Endothelial cell of umbilical vein (primary cell): ENCODE measurements at regions of chr15 and their contacts with region 1.

Region 1: GRCh38 chr15:43225201-43225949 is 4.6 kb upstream of the EPB42 start:
- DNase-seq: peak; percentile 56
- H3K4me3 ChIP-seq: no peak overlapping the region
- H3K27ac ChIP-seq: no peak overlapping the region
- H3K4me1 ChIP-seq: no peaks in the 10 kb centered on the region
- H3K27me3 ChIP-seq: peaks cover 8 to 19% of the 10 kb centered on the region in 2 experiments
- CTCF ChIP-seq: peak; percentile 73 to 76
- POLR2A ChIP-seq: no peak

Region 2: DNA sequence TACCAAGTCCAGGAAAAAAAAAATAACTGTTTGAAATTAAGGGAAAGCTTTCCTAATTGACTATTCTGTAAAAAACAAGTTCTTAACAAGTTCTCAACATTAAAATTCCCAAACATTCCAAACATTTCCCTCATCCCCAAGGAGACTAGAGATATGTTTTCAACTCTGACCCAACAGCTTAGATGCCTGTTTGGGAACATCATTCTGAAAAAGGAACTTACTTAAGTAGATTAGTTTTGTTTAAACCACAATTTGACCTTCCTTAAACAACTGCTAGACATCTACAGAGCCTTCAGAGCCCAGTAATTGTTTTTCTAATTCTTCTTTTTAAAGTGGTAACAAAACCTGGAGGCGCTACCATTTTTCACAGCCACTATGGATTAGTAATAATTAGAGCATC is 132.3 kb before region 1 on chr15:
- CTCF ChIA-PET with region 1: no interaction called
- POLR2A ChIA-PET with region 1: no interaction called
- dilution Hi-C with region 1: no loop called
- intact Hi-C with region 1: no loop called
- DNase-seq: no peak
- H3K4me3 ChIP-seq: no peak overlapping the region
- H3K27ac ChIP-seq: no peak overlapping the region
- H3K4me1 ChIP-seq: no peaks in the 10 kb centered on the region
- H3K27me3 ChIP-seq: no peaks in the 10 kb centered on the region
- CTCF ChIP-seq: no peak
- POLR2A ChIP-seq: no peak

Region 3: DNA sequence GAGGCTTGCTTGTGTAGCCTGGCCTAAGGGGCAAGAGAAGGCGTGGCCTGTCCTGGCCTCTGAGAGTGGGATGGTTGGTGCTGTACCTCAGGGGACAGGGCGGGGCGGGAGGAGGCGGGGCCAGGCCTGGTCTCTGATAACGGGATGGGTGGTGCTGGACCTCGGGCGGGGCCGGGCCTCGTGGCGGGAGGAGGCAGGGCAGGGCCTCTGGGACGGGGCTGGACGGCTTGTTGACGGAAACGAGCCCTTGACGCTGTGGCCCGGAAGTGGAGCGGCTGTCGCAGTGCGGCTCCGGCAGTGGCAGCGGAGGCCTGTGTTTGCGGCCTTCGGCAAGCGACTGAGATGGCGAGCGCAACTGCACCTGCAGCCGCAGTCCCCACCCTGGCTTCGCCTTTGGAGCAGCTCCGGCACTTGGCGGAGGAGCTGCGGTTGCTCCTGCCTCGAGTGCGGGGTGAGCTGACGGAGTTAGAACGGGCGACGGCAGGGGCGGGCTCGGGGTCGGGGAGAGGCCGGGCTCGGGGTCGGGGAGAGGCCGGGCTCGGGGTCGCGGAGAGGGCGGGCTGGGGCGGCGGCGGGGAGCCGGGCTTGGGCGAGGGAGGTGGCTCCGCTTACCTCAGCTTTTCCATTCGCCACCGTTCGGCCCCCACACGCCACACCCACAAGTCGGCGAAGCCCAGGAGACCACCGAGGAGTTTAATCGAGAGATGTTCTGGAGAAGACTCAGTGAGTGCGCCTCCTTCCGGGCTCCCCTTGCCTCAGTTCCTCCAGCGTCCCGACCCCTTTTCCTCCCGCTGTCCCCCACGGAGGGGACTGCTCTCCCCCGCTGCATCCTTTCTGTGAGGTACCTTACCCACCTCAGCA is 40.0 kb before region 1 on chr15 and contains the start of gene CCNDBP1:
- CTCF ChIA-PET with region 1: interaction called, 14 read pairs
- POLR2A ChIA-PET with region 1: no interaction called
- dilution Hi-C with region 1: no loop called
- intact Hi-C with region 1: no loop called
- DNase-seq: peak; percentile 70
- H3K4me3 ChIP-seq: peak within 1 kb of the TSS; percentile 32 to 76 (median 57)
- H3K27ac ChIP-seq: peak within 1 kb of the TSS; percentile 9
- H3K4me1 ChIP-seq: peaks cover 19% of the 10 kb centered on the region
- H3K27me3 ChIP-seq: no peaks in the 10 kb centered on the region
- CTCF ChIP-seq: peak in 1 of 2 donors; percentile 35
- POLR2A ChIP-seq: peak; percentile 73
- total RNA-seq, gene CCNDBP1: 39.9 and 41.4 TPM in 2 replicates

Region 4: GRCh38 chr15:43204016-43204901 is 21.1 kb before region 1 on chr15:
- CTCF ChIA-PET with region 1: interaction called, 28 read pairs
- POLR2A ChIA-PET with region 1: no interaction called
- dilution Hi-C with region 1: no loop called
- intact Hi-C with region 1: no loop called
- DNase-seq: peak; percentile 67
- H3K4me3 ChIP-seq: no peak overlapping the region
- H3K27ac ChIP-seq: no peak overlapping the region
- H3K4me1 ChIP-seq: no peaks in the 10 kb centered on the region
- H3K27me3 ChIP-seq: peaks cover 5 to 16% of the 10 kb centered on the region in 2 experiments
- CTCF ChIP-seq: peak; percentile 81 to 82
- POLR2A ChIP-seq: no peak

Region 5: GRCh38 chr15:43249236-43249635 is 23.9 kb after region 1 on chr15:
- CTCF ChIA-PET with region 1: interaction called, 28 read pairs
- POLR2A ChIA-PET with region 1: no interaction called
- dilution Hi-C with region 1: no loop called
- intact Hi-C with region 1: no loop called
- DNase-seq: no peak
- H3K4me3 ChIP-seq: no peak overlapping the region
- H3K27ac ChIP-seq: no peak overlapping the region
- H3K4me1 ChIP-seq: no peaks in the 10 kb centered on the region
- H3K27me3 ChIP-seq: peaks cover 9 to 12% of the 10 kb centered on the region in 2 experiments
- CTCF ChIP-seq: no peak
- POLR2A ChIP-seq: no peak

Region 6: DNA sequence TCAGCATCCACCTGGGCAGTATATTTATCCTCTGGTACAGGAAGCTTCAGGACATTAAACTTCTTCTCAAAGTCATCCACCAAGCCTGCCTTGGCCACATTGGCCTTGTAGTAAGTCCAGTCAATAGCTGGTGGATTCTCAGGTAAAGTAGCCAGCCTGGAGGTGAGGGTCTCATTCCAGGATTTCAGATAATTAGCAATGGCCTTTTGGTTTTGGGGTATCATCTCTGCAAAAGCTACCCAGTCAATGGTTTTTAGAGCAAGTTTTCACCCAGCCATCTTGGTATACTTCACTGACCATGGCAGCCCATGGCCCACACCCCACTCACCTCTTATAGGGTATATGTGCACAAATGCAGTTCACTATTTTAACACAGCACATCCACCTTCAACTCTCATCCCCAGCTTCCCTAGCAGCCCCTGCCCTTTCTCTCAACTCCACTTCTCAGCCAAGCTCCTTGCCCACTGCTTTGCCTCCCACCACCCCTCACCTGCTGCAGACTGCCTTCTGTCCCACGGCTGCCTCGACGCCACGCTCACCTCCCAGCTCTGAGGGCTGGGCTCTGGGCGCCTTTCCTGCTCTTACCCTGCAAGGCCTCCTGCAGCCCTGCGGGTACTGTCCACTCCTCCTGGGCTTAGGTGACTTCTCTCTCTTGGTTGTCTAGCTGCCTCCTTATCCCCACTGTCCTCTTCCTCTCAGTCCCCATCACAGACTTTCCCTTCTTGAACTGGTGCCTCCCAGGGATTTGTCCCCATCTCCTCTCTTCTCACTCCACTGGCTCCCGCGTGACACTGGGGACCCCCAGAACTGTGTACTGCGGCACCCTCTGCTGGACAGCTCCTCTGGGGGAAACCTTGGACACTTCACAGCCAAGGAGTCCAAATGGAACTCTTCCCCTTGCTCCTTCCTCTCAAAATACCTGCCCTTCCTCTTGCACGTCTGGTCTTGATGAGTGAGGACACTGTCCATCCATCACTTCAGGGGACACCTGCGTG is 43.0 kb after region 1 on chr15:
- CTCF ChIA-PET with region 1: interaction called, 58 read pairs
- POLR2A ChIA-PET with region 1: no interaction called
- dilution Hi-C with region 1: no loop called
- intact Hi-C with region 1: loop called (anchors 1 kb)
- DNase-seq: no peak
- H3K4me3 ChIP-seq: no peak overlapping the region
- H3K27ac ChIP-seq: no peak overlapping the region
- H3K4me1 ChIP-seq: no peaks in the 10 kb centered on the region
- H3K27me3 ChIP-seq: peaks cover 11 to 26% of the 10 kb centered on the region in 2 experiments
- CTCF ChIP-seq: peak in 1 of 2 donors; percentile 23
- POLR2A ChIP-seq: no peak

Region 7: GRCh38 chr15:43279491-43279890 is 54.1 kb after region 1 on chr15:
- CTCF ChIA-PET with region 1: interaction called, 427 read pairs
- POLR2A ChIA-PET with region 1: no interaction called
- dilution Hi-C with region 1: no loop called
- intact Hi-C with region 1: no loop called
- DNase-seq: no peak
- H3K4me3 ChIP-seq: no peak overlapping the region
- H3K27ac ChIP-seq: no peak overlapping the region
- H3K4me1 ChIP-seq: peaks cover 2% of the 10 kb centered on the region
- H3K27me3 ChIP-seq: peaks cover 0 to 6% of the 10 kb centered on the region in 2 experiments
- CTCF ChIP-seq: no peak
- POLR2A ChIP-seq: no peak